ENCODE measurements at regions of chr1 and their contacts with region 1.

Region 1: DNA sequence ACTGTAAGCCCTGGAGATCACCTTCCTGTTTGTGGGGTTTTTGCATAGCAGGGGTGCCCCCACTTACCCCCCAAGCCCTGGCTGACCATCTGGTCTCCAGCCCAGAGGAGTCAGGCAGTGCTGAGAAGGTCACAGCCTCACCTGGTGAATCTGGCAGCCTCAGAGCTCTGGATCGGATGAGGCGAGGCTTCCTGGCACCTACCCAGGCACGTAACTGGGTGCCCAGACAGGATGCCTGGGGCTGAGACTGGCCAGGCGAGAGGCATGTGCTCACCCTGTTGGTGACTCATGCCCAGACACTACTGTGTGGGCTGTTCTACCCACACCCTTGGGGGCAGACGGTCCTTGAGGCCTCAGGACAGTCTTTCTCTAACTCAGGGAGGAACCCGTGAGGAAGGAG is 15.2 kb upstream of the PADI3 start:
- DNase-seq: no peak
- CTCF ChIP-seq: no peak

Region 2: GRCh38 chr1:17125756-17126237 is 107.9 kb before region 1 on chr1:
- in situ Hi-C with region 1: loop called (anchors 5 kb)
- DNase-seq: peak; percentile 91
- CTCF ChIP-seq: peak; percentile 89